Endothelial cell of umbilical vein (primary cell): ENCODE measurements at regions of chr11 and their contacts with region 1.

Region 1: GRCh38 chr11:30143098-30143705 is 87.6 kb upstream of the FSHB start:
- DNase-seq: peak; percentile 42
- H3K4me3 ChIP-seq: no peak overlapping the region
- H3K27ac ChIP-seq: no peak overlapping the region
- H3K4me1 ChIP-seq: no peaks in the 10 kb centered on the region
- H3K27me3 ChIP-seq: no peaks in the 10 kb centered on the region
- CTCF ChIP-seq: peak; percentile 50 to 67
- POLR2A ChIP-seq: no peak

Region 2: DNA sequence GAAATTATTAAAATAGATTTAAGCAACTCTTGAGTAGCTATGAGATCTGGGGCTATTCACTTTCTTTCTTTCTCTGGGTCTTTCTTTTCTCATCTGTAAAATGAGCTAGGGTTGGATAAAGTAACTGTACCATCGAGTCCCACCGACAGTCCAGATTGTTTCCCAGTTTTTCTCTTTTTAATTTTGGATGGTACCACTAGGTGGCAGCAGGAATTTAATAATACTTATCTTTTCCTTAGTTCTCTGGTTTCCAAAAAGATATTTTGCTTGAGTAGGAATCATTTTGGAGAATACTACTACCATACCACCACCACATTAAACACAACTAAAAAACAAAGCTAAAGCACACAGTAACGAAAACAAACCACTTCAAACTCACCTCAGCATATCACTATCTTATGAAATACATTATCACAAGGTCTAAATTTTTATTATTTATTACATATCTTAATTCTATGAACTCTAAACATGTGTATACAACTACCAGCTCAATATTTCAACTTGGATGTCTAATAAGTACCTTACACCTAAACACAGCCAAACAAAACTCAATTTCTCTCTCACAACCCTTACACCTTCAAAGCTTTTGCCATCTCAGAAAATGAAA is 710.4 kb before region 1 on chr11:
- CTCF ChIA-PET with region 1: interaction called, 52 read pairs
- POLR2A ChIA-PET with region 1: no interaction called
- dilution Hi-C with region 1: no loop called
- intact Hi-C with region 1: loop called (anchors 1 kb)
- DNase-seq: peak; percentile 36
- H3K4me3 ChIP-seq: no peak overlapping the region
- H3K27ac ChIP-seq: no peak overlapping the region
- H3K4me1 ChIP-seq: no peaks in the 10 kb centered on the region
- H3K27me3 ChIP-seq: no peaks in the 10 kb centered on the region
- CTCF ChIP-seq: peak; percentile 14 to 34
- POLR2A ChIP-seq: no peak

Region 3: GRCh38 chr11:30116512-30116911 is 26.7 kb before region 1 on chr11:
- CTCF ChIA-PET with region 1: interaction called, 15 read pairs
- POLR2A ChIA-PET with region 1: no interaction called
- dilution Hi-C with region 1: no loop called
- intact Hi-C with region 1: no loop called
- DNase-seq: no peak
- H3K4me3 ChIP-seq: no peak overlapping the region
- H3K27ac ChIP-seq: no peak overlapping the region
- H3K4me1 ChIP-seq: no peaks in the 10 kb centered on the region
- H3K27me3 ChIP-seq: no peaks in the 10 kb centered on the region
- CTCF ChIP-seq: no peak
- POLR2A ChIP-seq: no peak

Region 4: DNA sequence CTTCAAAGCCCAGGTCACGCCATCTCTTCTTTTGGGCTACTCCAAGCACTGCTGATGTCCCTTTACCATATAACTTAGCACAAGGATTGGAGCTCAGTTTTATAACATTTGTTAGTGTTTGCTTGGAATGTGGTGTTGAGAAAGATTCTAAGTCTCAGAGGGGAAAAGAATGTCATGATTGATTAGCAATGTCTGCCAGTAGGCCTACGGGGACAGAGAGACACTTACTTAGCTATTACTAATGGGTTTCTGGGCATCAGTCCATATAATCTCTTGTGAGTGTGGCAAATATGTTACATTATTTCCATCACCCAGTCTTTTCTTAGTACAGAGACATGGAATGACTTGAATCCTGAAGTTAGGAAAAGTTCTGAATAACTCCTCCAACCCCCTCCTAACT is 12.2 kb after region 1 on chr11:
- CTCF ChIA-PET with region 1: interaction called, 47 read pairs
- POLR2A ChIA-PET with region 1: no interaction called
- dilution Hi-C with region 1: no loop called
- intact Hi-C with region 1: no loop called
- DNase-seq: no peak
- H3K4me3 ChIP-seq: no peak overlapping the region
- H3K27ac ChIP-seq: no peak overlapping the region
- H3K4me1 ChIP-seq: no peaks in the 10 kb centered on the region
- H3K27me3 ChIP-seq: no peaks in the 10 kb centered on the region
- CTCF ChIP-seq: no peak
- POLR2A ChIP-seq: no peak

Region 5: GRCh38 chr11:30172883-30173311 is 29.7 kb after region 1 on chr11:
- CTCF ChIA-PET with region 1: interaction called, 13 read pairs
- POLR2A ChIA-PET with region 1: no interaction called
- dilution Hi-C with region 1: no loop called
- intact Hi-C with region 1: no loop called
- DNase-seq: no peak
- H3K4me3 ChIP-seq: no peak overlapping the region
- H3K27ac ChIP-seq: no peak overlapping the region
- H3K4me1 ChIP-seq: no peaks in the 10 kb centered on the region
- H3K27me3 ChIP-seq: no peaks in the 10 kb centered on the region
- CTCF ChIP-seq: no peak
- POLR2A ChIP-seq: no peak